ENCODE measurements at regions of chr19 and their contacts with region 1.

Region 1: GRCh38 chr19:2750808-2751443 is 11.1 kb upstream of the SLC39A3 start:
- DNase-seq: no peak
- H3K4me3 Mint-ChIP-seq: no peak overlapping the region
- H3K27ac Mint-ChIP-seq: no peak overlapping the region
- H3K4me1 Mint-ChIP-seq: peaks cover 2% of the 10 kb centered on the region
- H3K27me3 Mint-ChIP-seq: peaks cover 1% of the 10 kb centered on the region

Region 2: GRCh38 chr19:2648528-2648937 is 102.4 kb before region 1 on chr19:
- intact Hi-C with region 1: loop called (anchors 1 kb)
- DNase-seq: peak; percentile 92
- H3K4me3 Mint-ChIP-seq: no peak overlapping the region
- H3K27ac Mint-ChIP-seq: no peak overlapping the region
- H3K4me1 Mint-ChIP-seq: no peaks in the 10 kb centered on the region
- H3K27me3 Mint-ChIP-seq: no peaks in the 10 kb centered on the region

Measured in activated CD4-positive, alpha-beta T cell treated with anti-CD3 and anti-CD28 coated beads, Interleukin-2, amount 10 ng/mL, durations not matched to agents 24 days and 14 days (primary cell).